Activated B cell treated with CpG ODN at 0.5 μM for 24 hours (primary cell): ENCODE measurements at regions of chr12 and their contacts with region 1.

Region 1: DNA sequence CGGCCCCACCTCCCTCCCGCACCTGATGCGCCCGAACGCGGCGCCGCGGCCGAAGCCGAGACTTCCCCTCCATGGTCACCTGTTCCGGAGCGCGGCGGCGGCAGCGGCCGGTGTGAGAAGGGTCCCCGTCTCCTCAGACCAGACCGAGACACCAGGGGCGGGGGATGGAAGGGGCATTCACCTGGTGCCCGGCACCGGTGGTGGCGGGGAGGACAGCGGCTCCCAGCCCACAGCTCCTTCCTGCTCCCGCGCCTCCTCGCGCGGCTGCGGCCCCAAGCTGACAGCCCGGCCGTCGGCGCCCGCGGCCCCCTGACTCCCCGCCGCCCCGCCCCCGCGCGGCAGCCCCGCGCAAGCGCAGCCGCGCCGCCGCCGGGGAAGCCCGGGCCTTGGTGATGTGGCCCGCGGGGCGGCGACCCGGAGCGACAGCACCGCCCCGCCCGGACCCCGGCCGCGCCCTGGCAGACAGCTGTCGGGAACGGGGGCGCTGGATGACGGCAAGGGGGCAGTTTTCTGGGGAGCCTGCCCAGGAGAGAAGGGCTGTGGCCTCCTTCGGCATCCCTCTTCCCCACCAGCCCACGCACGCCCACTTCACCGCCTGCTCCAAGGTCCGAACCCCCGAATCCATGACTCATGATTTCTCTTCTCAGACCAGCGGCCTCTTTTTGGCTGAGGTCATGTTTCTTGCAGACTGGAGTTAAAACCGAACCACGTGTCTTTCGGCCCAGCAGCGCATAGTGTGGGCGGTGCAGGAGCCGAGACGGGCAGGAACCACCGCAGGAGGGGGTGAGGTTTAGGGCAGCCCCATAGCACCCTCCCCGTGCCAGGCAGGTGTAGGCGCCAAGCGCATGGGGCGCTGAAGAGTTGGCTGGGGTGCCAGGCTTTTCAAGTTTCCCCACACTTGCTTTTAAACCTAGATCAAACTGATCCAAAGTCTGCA is at the start of gene SLC41A2:
- DNase-seq: peak; percentile 90
- ATAC-seq: peak; percentile 86
- H3K4me3 Mint-ChIP-seq: peak within 1 kb of the TSS; percentile 93
- H3K27ac Mint-ChIP-seq: peak within 1 kb of the TSS; percentile 92
- H3K4me1 Mint-ChIP-seq: peaks cover 26% of the 10 kb centered on the region
- H3K27me3 Mint-ChIP-seq: peaks cover 2% of the 10 kb centered on the region
- CTCF ChIP-seq: no peak
- total RNA-seq, gene SLC41A2: 11.1 and 12.6 TPM in 2 replicates

Region 2: GRCh38 chr12:104582739-104583138 is 375.5 kb before region 1 on chr12:
- CTCF ChIA-PET with region 1: no interaction called
- POLR2A ChIA-PET with region 1: no interaction called
- intact Hi-C with region 1: loop called (anchors 5 kb)
- DNase-seq: peak; percentile 26
- ATAC-seq: peak; percentile 86
- H3K4me3 Mint-ChIP-seq: peak overlapping the region; percentile 56
- H3K27ac Mint-ChIP-seq: peak overlapping the region; percentile 70
- H3K4me1 Mint-ChIP-seq: peaks cover 89% of the 10 kb centered on the region
- H3K27me3 Mint-ChIP-seq: no peaks in the 10 kb centered on the region
- CTCF ChIP-seq: no peak

Region 3: GRCh38 chr12:104671407-104672098 is 286.7 kb before region 1 on chr12:
- CTCF ChIA-PET with region 1: no interaction called
- POLR2A ChIA-PET with region 1: no interaction called
- intact Hi-C with region 1: loop called (anchors 5 kb)
- DNase-seq: peak; percentile 53
- ATAC-seq: peak; percentile 82
- H3K4me3 Mint-ChIP-seq: peak overlapping the region; percentile 71
- H3K27ac Mint-ChIP-seq: peak overlapping the region; percentile 92
- H3K4me1 Mint-ChIP-seq: peaks cover 80% of the 10 kb centered on the region
- H3K27me3 Mint-ChIP-seq: no peaks in the 10 kb centered on the region
- CTCF ChIP-seq: no peak

Region 4: DNA sequence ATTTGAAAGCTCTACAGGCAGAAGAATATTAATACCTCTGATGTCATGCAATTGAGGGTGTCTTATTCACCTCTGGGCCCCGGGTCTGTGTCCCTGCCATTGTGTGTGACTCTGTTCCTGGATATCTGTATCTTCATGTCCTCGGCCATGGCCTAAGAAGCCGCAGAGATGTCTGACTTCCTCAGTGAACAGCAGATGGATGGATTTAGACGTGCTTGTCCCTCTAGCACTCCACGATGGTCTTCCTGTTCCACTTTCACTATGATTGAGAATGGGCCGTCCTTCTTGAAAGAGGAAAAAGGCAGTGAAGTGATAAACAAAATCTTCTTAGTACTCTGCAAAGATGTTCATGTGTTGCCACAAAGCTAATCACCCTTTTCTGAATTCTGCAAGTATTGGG is 217.6 kb before region 1 on chr12:
- CTCF ChIA-PET with region 1: no interaction called
- POLR2A ChIA-PET with region 1: no interaction called
- intact Hi-C with region 1: loop called (anchors 5 kb)
- DNase-seq: peak; percentile 30
- ATAC-seq: peak; percentile 90
- H3K4me3 Mint-ChIP-seq: peak overlapping the region; percentile 72
- H3K27ac Mint-ChIP-seq: peak overlapping the region; percentile 93
- H3K4me1 Mint-ChIP-seq: peaks cover 97% of the 10 kb centered on the region
- H3K27me3 Mint-ChIP-seq: no peaks in the 10 kb centered on the region
- CTCF ChIP-seq: no peak

Region 5: GRCh38 chr12:104974616-104975290 is 16.5 kb after region 1 on chr12:
- CTCF ChIA-PET with region 1: interaction called, 6 read pairs
- POLR2A ChIA-PET with region 1: interaction called, 11 read pairs
- intact Hi-C with region 1: loop called (anchors 1 kb)
- DNase-seq: peak; percentile 35
- ATAC-seq: peak; percentile 98
- H3K4me3 Mint-ChIP-seq: peak overlapping the region; percentile 17
- H3K27ac Mint-ChIP-seq: peak overlapping the region; percentile 72
- H3K4me1 Mint-ChIP-seq: peaks cover 40% of the 10 kb centered on the region
- H3K27me3 Mint-ChIP-seq: no peaks in the 10 kb centered on the region
- CTCF ChIP-seq: no peak

Region 6: DNA sequence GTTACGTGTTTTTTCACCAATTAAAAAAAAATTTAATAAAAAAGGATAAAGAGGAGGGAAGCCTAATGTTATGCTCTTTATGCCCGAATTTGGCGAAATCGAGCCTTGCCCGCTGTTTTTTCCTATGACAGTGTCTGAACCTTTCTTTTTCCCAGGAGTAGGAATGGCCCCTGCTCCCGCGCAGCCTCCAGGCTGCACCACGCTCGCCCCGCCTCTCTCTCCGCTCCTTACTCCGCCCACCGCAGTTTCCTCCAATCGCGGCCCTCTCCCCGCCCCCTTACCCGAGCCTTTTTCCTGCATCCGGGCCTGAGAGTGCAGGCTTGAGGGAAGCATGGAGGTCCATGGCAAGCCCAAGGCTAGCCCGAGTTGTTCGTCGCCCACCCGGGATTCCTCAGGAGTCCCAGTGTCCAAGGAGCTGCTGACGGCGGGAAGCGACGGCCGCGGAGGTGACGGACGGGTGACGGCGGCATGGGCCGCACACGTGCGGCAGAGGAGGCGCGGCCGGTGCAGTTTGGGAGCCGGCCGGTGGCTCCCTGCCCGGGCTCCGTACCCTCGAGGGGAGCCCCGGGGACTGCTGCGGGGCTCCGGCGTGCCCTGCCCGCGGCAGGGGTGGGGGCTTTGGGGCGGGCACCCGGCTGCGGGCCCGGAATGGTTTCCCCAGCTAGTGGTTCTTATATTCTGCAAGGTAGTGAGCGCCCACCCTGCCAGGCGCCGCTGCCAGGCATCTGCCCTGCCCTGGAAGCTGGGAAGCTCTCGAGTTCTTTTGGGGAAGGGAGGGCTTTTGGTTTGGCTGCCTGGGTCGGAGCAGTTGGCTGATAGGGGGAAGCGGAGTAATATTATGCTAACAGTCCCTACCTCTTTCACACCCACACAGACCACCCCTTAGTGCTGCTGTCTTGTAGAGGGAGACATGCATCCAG is 28.0 kb after region 1 on chr12 and contains the start of gene NOPCHAP1:
- CTCF ChIA-PET with region 1: interaction called, 3 read pairs
- POLR2A ChIA-PET with region 1: interaction called, 8 read pairs
- intact Hi-C with region 1: loop called (anchors 1 kb)
- DNase-seq: peak; percentile 83
- ATAC-seq: peak; percentile 98
- H3K4me3 Mint-ChIP-seq: peak within 1 kb of the TSS; percentile 91
- H3K27ac Mint-ChIP-seq: peak within 1 kb of the TSS; percentile 70
- H3K4me1 Mint-ChIP-seq: peaks cover 24% of the 10 kb centered on the region
- H3K27me3 Mint-ChIP-seq: no peaks in the 10 kb centered on the region
- CTCF ChIP-seq: no peak
- total RNA-seq, gene NOPCHAP1: 26.4 and 30.0 TPM in 2 replicates

Region 7: GRCh38 chr12:105047308-105047707 is 89.0 kb after region 1 on chr12:
- CTCF ChIA-PET with region 1: no interaction called
- POLR2A ChIA-PET with region 1: no interaction called
- intact Hi-C with region 1: no loop called
- DNase-seq: no peak
- ATAC-seq: no peak
- H3K4me3 Mint-ChIP-seq: no peak overlapping the region
- H3K27ac Mint-ChIP-seq: no peak overlapping the region
- H3K4me1 Mint-ChIP-seq: peaks cover 8% of the 10 kb centered on the region
- H3K27me3 Mint-ChIP-seq: no peaks in the 10 kb centered on the region
- CTCF ChIP-seq: no peak